ENCODE measurements at regions of chr5 and their contacts with region 1.

Region 1: DNA sequence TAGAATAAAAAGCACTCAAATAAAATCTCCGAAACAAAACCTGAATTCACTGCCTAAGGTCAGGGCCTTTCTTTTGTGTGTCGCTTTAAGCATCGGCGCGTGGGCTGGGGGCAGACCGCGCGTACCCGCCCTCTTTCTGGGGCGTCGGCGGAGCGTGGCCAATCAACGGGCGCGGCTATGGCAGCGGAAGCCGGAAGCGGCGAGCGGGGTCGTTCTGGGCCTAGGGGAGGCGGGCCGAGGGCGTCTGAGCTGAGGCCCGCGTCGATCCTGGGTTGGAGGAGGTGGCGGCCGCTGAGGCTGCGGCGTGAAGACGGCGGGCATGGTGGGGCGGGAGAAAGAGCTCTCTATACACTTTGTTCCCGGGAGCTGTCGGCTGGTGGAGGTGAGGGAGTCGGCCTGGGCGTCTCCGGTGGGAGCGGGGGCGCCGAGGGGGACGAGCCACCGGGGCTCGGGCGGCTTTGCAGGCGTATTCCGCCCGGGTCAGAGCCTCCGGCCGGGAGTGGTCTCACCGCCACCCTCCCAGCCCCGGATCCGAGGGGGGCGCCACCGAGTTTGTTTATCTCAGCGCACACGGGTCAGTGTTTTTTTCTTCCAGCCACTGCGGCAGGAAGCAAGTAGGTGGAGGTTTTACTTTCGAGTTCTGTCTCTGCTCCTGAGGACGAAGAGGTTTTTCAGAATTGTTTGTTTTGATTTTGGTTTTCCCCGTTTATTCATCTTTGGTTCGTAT is at the start of gene MAT2B:
- DNase-seq: peak; percentile 94
- ATAC-seq: peak; percentile 91
- H3K4me3 Mint-ChIP-seq: peak within 1 kb of the TSS; percentile 97
- H3K27ac Mint-ChIP-seq: peak within 1 kb of the TSS; percentile 98
- H3K4me1 Mint-ChIP-seq: peaks cover 51% of the 10 kb centered on the region
- H3K27me3 Mint-ChIP-seq: no peaks in the 10 kb centered on the region
- CTCF ChIP-seq: no peak
- total RNA-seq, gene MAT2B: 51.8 to 55.7 TPM (median 53.1 TPM) in 3 replicates

Region 2: DNA sequence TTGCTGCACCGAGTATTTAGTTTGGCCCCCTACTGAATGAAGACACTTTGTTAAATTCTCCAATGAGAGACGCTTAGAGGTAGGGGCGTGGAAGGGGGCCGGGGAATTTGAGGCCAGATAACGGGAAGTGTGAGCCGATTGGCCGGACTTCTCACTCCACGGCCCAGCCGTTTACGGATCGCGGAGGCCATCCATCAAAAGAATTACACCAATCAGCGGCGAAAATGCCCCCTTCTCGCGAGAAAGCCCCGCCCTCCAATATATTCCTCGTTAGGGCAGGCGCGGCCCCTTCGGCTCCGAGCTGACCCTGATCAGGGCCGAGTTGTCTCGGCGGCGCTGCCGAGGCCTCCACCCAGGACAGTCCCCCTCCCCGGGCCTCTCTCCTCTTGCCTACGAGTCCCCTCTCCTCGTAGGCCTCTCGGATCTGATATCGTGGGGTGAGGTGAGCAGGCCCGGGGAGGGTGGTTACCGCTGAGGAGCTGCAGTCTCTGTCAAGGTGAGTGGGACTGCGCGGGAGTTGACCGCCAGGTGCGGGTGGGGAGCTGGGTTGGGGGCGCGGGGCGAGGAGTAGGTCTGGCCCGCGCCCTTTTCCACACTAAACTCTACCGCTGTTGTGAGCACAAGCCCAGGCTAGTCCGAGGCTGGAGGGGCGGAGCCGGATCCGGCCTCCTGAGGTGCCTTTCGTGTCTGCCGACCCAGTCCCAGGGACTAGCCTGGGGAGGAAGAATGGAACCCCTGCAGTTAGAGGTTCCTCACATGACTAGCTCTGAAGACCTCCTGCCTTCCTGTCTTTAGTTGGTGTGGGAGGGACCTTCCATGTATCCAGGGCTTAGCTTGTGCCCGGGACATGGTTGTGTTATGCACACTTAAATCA is 68.0 kb before region 1 on chr5 and contains the start of gene CCNG1:
- CTCF ChIA-PET with region 1: interaction called, 3 read pairs
- POLR2A ChIA-PET with region 1: interaction called, 10 read pairs
- DNase-seq: peak; percentile 95
- ATAC-seq: peak; percentile 93
- H3K4me3 Mint-ChIP-seq: peak within 1 kb of the TSS; percentile 95
- H3K27ac Mint-ChIP-seq: peak within 1 kb of the TSS; percentile 96
- H3K4me1 Mint-ChIP-seq: peaks cover 44% of the 10 kb centered on the region
- H3K27me3 Mint-ChIP-seq: no peaks in the 10 kb centered on the region
- CTCF ChIP-seq: no peak
- total RNA-seq, gene CCNG1: 395 to 438 TPM (median 433 TPM) in 3 replicates

Region 3: GRCh38 chr5:163459922-163460766 is 45.4 kb before region 1 on chr5 and contains the starts of genes HMMR and NUDCD2:
- CTCF ChIA-PET with region 1: interaction called, 6 read pairs
- POLR2A ChIA-PET with region 1: interaction called, 77 read pairs
- DNase-seq: peak; percentile 93
- ATAC-seq: peak; percentile 94
- H3K4me3 Mint-ChIP-seq: peak within 1 kb of the TSS; percentile 99
- H3K27ac Mint-ChIP-seq: peak within 1 kb of the TSS; percentile 100
- H3K4me1 Mint-ChIP-seq: peaks cover 30% of the 10 kb centered on the region
- H3K27me3 Mint-ChIP-seq: peaks cover 3% of the 10 kb centered on the region
- CTCF ChIP-seq: no peak
- total RNA-seq, gene HMMR: 69.1 to 78.5 TPM (median 73.3 TPM) in 3 replicates
- total RNA-seq, gene NUDCD2: 68.5 to 73.4 TPM (median 69.4 TPM) in 3 replicates

Region 4: GRCh38 chr5:163473635-163474243 is 31.8 kb before region 1 on chr5:
- CTCF ChIA-PET with region 1: no interaction called
- POLR2A ChIA-PET with region 1: no interaction called
- DNase-seq: no peak
- ATAC-seq: no peak
- H3K4me3 Mint-ChIP-seq: no peak overlapping the region
- H3K27ac Mint-ChIP-seq: no peak overlapping the region
- H3K4me1 Mint-ChIP-seq: no peaks in the 10 kb centered on the region
- H3K27me3 Mint-ChIP-seq: no peaks in the 10 kb centered on the region
- CTCF ChIP-seq: no peak

Region 5: DNA sequence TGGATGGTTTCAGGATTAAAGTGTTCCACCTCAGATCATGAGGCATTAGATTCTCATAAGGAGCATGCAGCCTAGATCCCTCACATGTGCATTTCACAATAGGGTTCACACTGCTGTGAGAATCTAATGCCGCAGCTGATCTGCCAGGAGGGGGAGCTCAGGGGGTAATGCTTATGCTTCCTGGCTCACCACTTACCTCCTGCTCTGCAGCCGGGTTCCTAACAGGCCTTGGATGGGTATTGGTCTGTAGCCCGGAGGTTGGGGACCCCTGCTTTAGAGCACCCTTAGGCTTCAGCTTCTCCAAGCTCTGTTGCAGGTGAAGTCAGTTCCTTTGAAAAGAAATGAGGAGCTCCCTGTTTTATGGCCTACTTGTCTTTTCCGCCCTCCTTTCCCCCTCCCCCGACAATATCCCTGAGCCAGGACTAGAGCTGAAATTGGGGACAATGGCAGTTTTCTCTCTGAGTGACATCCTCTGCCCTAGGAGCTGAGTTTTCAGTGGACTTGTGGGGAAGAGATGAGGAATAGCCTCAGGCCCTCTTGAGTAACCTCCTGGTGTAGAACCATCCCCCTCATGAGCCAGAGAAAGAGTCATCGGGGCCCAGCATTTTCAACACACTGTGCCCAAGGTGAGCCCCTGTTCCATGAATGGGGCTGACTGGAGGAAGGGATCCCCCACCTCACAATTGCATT is 16.3 kb before region 1 on chr5:
- CTCF ChIA-PET with region 1: interaction called, 18 read pairs
- POLR2A ChIA-PET with region 1: interaction called, 8 read pairs
- DNase-seq: peak; percentile 60
- ATAC-seq: peak; percentile 99
- H3K4me3 Mint-ChIP-seq: no peak overlapping the region
- H3K27ac Mint-ChIP-seq: no peak overlapping the region
- H3K4me1 Mint-ChIP-seq: peaks cover 8% of the 10 kb centered on the region
- H3K27me3 Mint-ChIP-seq: no peaks in the 10 kb centered on the region
- CTCF ChIP-seq: 0 out of 2 replicates have a peak, but pooled peaks have one; percentile 8